HepG2 (cell line): ENCODE measurements at regions of chr17 and their contacts with region 1.

Region 1: GRCh38 chr17:4576729-4577322 is 7.5 kb upstream of the SMTNL2 start:
- DNase-seq: peak; percentile 52
- ATAC-seq: peak; percentile 81
- H3K4me3 ChIP-seq: peak overlapping the region; percentile 47 to 67 (median 56)
- H3K27ac ChIP-seq: peak overlapping the region; percentile 33
- H3K4me1 ChIP-seq: peaks cover 65% of the 10 kb centered on the region
- H3K27me3 ChIP-seq: peaks cover 2 to 11% of the 10 kb centered on the region in 2 experiments; a peak in 3 of 5 replicates
- CTCF ChIP-seq: no peak
- EP300 ChIP-seq: no peak
- POLR2A ChIP-seq: peak in 1 of 2 experiments; percentile 31; a peak in 1 of 4 replicates
- RAD21 ChIP-seq: no peak

Region 2: DNA sequence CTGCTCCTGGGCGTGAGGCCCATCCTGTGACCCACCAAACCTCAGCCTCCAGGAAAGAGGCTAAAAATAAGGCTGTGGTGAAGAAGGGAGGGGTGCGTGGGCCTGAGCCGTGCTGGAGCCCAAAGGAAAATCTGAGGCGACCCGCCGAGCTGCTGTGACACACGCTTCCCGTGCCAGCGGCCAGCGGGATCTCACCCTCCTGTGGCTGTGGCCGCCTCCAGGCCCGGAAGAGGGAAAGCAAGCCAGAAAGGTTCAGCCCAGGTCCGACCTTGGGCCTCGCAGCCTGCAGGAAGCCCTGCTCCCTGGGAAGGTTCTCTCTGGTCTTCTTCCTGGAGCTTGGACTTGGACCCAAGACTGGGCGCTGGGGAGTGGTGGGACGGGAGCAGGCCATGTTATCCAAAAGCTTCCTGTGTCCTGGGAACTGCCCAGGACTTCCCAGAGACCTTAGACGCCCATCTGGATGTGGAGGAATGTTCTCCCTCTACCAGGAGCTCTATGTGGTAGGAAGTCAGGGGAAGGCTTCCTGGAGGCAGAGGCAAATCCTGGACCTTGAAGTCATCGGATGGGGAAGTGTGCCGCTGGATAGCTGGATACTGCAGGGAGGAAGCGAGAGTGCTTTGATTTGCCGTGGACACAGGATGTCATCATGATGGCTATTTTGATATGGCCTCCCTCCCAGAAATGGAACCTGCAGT is 66.8 kb before region 1 on chr17:
- CTCF ChIA-PET with region 1: no interaction called
- POLR2A ChIA-PET with region 1: no interaction called
- in situ Hi-C with region 1: no loop called
- intact Hi-C with region 1: no loop called
- DNase-seq: no peak
- ATAC-seq: no peak
- H3K4me3 ChIP-seq: no peak overlapping the region
- H3K27ac ChIP-seq: no peak overlapping the region
- H3K4me1 ChIP-seq: no peaks in the 10 kb centered on the region
- H3K27me3 ChIP-seq: peaks cover 12 to 70% of the 10 kb centered on the region in 2 experiments
- CTCF ChIP-seq: no peak
- EP300 ChIP-seq: no peak
- POLR2A ChIP-seq: no peak
- RAD21 ChIP-seq: no peak

Region 3: GRCh38 chr17:4554997-4555799 is 21.6 kb before region 1 on chr17 and contains the start of gene MYBBP1A:
- CTCF ChIA-PET with region 1: no interaction called
- POLR2A ChIA-PET with region 1: interaction called, 21 read pairs
- in situ Hi-C with region 1: no loop called
- intact Hi-C with region 1: no loop called
- DNase-seq: peak; percentile 92
- ATAC-seq: peak; percentile 91
- H3K4me3 ChIP-seq: peak within 1 kb of the TSS; percentile 56 to 95 (median 87)
- H3K27ac ChIP-seq: peak within 1 kb of the TSS; percentile 69
- H3K4me1 ChIP-seq: peaks cover 43% of the 10 kb centered on the region
- H3K27me3 ChIP-seq: no peaks in the 10 kb centered on the region
- CTCF ChIP-seq: peak; percentile 36; the same call in 1 of the 2 replicates
- EP300 ChIP-seq: no peak
- POLR2A ChIP-seq: peak; percentile 78 to 92
- RAD21 ChIP-seq: no peak
- total RNA-seq, gene MYBBP1A: 40.4 and 54.8 TPM in 2 replicates

Region 4: DNA sequence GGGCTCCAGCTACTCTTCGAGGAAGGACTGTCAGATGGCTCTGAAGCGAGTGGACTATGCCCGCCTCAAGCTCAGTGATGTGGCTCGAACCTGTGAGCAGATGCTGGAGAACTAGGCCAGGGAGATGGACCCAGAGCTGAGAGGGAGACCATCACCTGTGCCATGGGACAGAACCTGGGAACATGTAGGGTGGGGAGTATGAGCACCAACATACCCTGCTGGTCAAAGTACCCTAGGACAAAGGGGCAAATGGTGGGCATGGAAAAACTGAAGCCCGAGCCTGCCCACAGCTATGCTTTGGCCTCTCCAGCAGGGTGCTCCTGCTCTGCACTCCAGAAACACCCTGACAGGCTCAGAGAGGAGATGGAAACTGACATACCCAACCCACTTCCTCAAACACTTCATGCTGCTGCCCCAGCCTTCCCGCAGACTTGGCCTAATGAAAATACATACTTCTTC is 156.3 kb after region 1 on chr17:
- CTCF ChIA-PET with region 1: no interaction called
- POLR2A ChIA-PET with region 1: no interaction called
- in situ Hi-C with region 1: no loop called
- intact Hi-C with region 1: no loop called
- DNase-seq: peak; percentile 37
- ATAC-seq: peak; percentile 7; the same call in 2 of the 3 replicates
- H3K4me3 ChIP-seq: no peak overlapping the region
- H3K27ac ChIP-seq: peak overlapping the region; percentile 10
- H3K4me1 ChIP-seq: peaks cover 71% of the 10 kb centered on the region
- H3K27me3 ChIP-seq: no peaks in the 10 kb centered on the region; a peak in 1 of 5 replicates
- CTCF ChIP-seq: peak; percentile 60
- EP300 ChIP-seq: no peak
- POLR2A ChIP-seq: 0 out of 4 replicates have a peak, but pooled peaks of 1 of the 2 experiments have one; percentile 12
- RAD21 ChIP-seq: peak; percentile 46